ENCODE measurements at regions of chr14 and their contacts with region 1.

Region 1: DNA sequence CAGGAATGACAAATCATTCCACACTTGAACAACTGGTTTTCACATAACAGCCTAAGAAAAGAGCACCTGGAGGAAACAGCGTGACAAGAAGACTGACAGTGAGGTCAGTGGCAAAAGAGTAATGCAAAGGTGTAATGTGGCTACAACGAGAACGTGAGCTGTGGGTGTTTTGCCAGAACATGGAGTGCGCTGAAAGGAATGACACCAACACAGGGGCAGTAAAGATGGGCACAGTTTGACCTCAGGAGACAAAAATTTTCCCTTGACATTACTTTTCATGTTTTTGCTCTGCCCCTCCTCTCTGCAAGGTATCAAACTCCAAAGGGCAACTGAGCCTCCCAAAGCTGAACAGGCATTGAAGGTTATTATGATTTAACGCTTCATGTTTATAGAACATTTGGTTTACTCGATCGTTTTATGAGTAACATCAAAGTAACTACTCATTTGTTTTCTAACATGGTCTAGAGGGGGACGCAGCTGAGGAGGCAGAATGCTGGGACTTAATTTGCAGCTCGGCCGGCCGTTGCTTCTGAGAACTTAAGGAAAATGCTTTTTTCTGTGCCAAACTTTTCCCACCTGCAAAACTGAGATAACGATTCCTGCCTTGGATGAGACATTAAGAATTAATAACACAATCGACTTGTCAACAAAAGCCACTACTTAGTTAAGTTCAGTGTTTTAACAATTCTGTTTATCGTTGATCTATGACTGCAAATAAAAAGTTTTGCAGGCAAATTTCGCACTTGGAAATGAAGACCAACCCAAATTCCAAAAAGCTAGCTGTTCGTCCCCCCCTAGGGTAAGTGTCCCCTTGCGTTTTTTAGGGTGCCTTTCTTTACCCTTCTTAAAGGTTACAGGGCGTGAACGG is 954 bp downstream of the HAUS4 start:
- DNase-seq: no peak
- ATAC-seq: no peak
- H3K4me3 ChIP-seq: peak overlapping the region; percentile 68
- H3K27ac ChIP-seq: peak overlapping the region; percentile 80
- H3K4me1 ChIP-seq: peaks cover 5% of the 10 kb centered on the region
- H3K27me3 ChIP-seq: no peaks in the 10 kb centered on the region
- CTCF ChIP-seq: no peak
- POLR2A ChIP-seq: no peak
- RAD21 ChIP-seq: no peak

Region 2: DNA sequence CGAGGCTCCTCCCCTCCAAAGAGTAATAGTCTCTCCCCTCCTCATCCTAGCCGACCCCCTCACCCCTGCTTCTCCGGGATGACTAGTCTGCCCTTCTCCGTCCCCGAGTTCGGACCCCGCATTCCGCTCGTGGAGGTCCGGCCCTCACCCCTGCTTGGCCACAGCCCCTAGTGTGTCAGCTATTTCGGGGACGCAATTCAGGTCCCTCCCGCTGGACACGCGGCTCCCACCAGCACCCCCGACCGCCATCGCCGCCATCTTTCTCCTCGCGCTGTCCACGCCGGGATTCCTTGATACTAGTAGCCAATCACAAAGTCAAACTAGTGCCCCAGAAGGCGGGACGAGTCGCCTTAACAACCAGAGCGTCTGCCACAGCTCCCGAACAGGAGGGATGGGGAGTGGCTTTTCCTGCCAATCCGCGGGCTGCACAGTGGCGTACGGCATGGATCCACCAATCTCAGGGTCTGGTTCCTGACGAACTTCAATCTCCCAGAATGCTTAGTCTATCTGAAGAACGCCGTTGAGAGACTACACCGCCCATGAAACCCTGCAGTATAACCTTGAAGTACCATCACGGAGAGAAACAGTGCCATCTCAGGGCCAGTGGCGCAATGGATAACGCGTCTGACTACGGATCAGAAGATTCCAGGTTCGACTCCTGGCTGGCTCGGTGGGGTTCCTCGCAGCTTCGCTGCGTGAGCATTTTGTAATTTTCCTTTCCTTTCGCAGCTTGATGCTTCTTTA is 26.7 kb before region 1 on chr14 and contains the start of gene PRMT5:
- CTCF ChIA-PET with region 1: interaction called, 13 read pairs
- POLR2A ChIA-PET with region 1: no interaction called
- dilution Hi-C with region 1: no loop called
- in situ Hi-C with region 1: no loop called
- intact Hi-C with region 1: loop called (anchors 2 kb)
- DNase-seq: peak; percentile 100
- ATAC-seq: peak; percentile 97
- H3K4me3 ChIP-seq: peak within 1 kb of the TSS; percentile 64
- H3K27ac ChIP-seq: peak within 1 kb of the TSS; percentile 82
- H3K4me1 ChIP-seq: peaks cover 3% of the 10 kb centered on the region; the same call in 1 of the 2 replicates
- H3K27me3 ChIP-seq: no peaks in the 10 kb centered on the region
- CTCF ChIP-seq: no peak
- POLR2A ChIP-seq: peak; percentile 91
- RAD21 ChIP-seq: no peak
- total RNA-seq, gene PRMT5: 92.2 and 99.3 TPM in 2 replicates

Measured in IMR-90 (cell line).